ENCODE measurements at regions of chr6 and their contacts with region 1.

Region 1: GRCh38 chr6:26537846-26538571 is at the start of gene HMGN4:
- DNase-seq: peak; percentile 92 to 96 (median 95)
- H3K4me3 ChIP-seq: peak within 1 kb of the TSS; percentile 83 to 90
- H3K4me3 Mint-ChIP-seq: peak within 1 kb of the TSS; percentile 89 to 98 (median 93)
- H3K27ac ChIP-seq: peak within 1 kb of the TSS; percentile 90
- H3K27ac Mint-ChIP-seq: peak within 1 kb of the TSS; percentile 94 to 99 (median 97)
- H3K4me1 ChIP-seq: peaks cover 66% of the 10 kb centered on the region
- H3K4me1 Mint-ChIP-seq: peaks cover 38 to 76% (median 56%) of the 10 kb centered on the region in 4 donors
- H3K27me3 ChIP-seq: no peaks in the 10 kb centered on the region
- H3K27me3 Mint-ChIP-seq: peaks cover 3 to 6% of the 10 kb centered on the region in 2 donors
- total RNA-seq, gene HMGN4: 102 to 105 TPM

Region 2: GRCh38 chr6:26054857-26055669 is 482.9 kb before region 1 on chr6:
- CTCF ChIA-PET with region 1: no interaction called
- POLR2A ChIA-PET with region 1: interaction called, 5 read pairs
- intact Hi-C with region 1: loop called (anchors 10 kb)
- DNase-seq: peak; percentile 89 to 96 (median 91)
- H3K4me3 ChIP-seq: peak overlapping the region; percentile 67 to 78
- H3K4me3 Mint-ChIP-seq: peak overlapping the region; percentile 93 to 96 (median 94)
- H3K27ac ChIP-seq: peak overlapping the region; percentile 84
- H3K27ac Mint-ChIP-seq: peak overlapping the region; percentile 91 to 98 (median 98)
- H3K4me1 ChIP-seq: peaks cover 24% of the 10 kb centered on the region
- H3K4me1 Mint-ChIP-seq: peaks cover 7 to 34% (median 15%) of the 10 kb centered on the region in 4 donors
- H3K27me3 ChIP-seq: no peaks in the 10 kb centered on the region
- H3K27me3 Mint-ChIP-seq: no peaks in the 10 kb centered on the region

Region 3: GRCh38 chr6:26249957-26250697 is 287.9 kb before region 1 on chr6:
- CTCF ChIA-PET with region 1: no interaction called
- POLR2A ChIA-PET with region 1: interaction called, 13 read pairs
- intact Hi-C with region 1: no loop called
- DNase-seq: peak; percentile 79 to 88 (median 83)
- H3K4me3 ChIP-seq: peak overlapping the region; percentile 86 to 88
- H3K4me3 Mint-ChIP-seq: peak overlapping the region; percentile 92 to 99 (median 98)
- H3K27ac ChIP-seq: peak overlapping the region; percentile 59
- H3K27ac Mint-ChIP-seq: peak overlapping the region; percentile 85 to 97 (median 94)
- H3K4me1 ChIP-seq: peaks cover 25% of the 10 kb centered on the region
- H3K4me1 Mint-ChIP-seq: peaks cover 28 to 53% (median 40%) of the 10 kb centered on the region in 4 donors
- H3K27me3 ChIP-seq: no peaks in the 10 kb centered on the region
- H3K27me3 Mint-ChIP-seq: no peaks in the 10 kb centered on the region

Region 4: DNA sequence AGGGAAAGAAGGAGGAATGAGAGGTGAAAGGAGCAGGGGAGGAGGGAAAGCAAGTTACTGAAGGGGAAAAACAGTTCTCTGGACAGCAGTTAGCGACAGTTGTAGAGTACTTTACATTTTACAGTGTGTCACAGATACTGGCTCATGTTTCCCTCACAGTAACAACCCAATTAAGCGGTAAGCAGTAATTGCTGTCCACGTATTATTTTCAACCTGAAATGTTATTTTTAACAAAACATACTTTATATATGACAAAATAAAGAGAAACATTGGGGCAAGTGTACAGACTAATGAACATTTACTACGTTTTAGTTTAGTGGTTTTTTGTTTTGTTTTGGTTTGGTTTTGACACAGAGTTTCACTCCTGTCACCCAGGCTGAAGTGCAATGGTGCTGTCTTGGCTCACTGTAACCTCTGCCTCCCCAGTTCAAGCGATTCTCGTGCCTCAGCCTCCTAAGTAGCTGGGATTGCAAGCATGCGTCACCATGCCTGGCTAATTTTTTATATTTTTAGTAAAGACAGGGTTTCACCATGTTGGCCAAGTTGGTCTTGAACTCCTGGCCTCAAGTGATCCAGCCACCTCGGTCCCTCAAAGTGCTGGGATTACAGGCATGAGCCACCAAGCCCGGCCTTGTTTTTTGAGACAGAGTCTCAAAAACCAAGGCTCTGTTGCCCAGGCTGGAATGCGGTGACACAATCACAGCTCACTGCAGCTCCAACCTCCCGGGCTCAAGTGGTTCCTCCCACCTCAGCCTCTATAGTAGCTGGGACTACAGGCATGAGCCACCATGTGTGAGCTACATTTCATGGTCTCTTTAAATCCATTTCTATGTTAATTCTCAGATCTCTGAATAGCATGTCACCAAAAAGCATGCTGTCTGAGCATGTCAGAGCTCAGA is 195.7 kb before region 1 on chr6:
- CTCF ChIA-PET with region 1: interaction called, 10 read pairs
- POLR2A ChIA-PET with region 1: interaction called, 10 read pairs
- intact Hi-C with region 1: loop called (anchors 1 kb)
- DNase-seq: no peak
- H3K4me3 ChIP-seq: peak overlapping the region; percentile 39 to 40
- H3K4me3 Mint-ChIP-seq: peak overlapping the region; percentile 68 to 86 (median 86)
- H3K27ac ChIP-seq: no peak overlapping the region
- H3K27ac Mint-ChIP-seq: peak overlapping the region in 5 of 7 donors; percentile 42 to 91 (median 52)
- H3K4me1 ChIP-seq: peaks cover 11% of the 10 kb centered on the region
- H3K4me1 Mint-ChIP-seq: peaks cover 6 to 8% (median 7%) of the 10 kb centered on the region in 4 donors
- H3K27me3 ChIP-seq: no peaks in the 10 kb centered on the region
- H3K27me3 Mint-ChIP-seq: no peaks in the 10 kb centered on the region

Region 5: GRCh38 chr6:26394289-26394688 is 143.7 kb before region 1 on chr6:
- CTCF ChIA-PET with region 1: no interaction called
- POLR2A ChIA-PET with region 1: no interaction called
- intact Hi-C with region 1: no loop called
- DNase-seq: no peak
- H3K4me3 ChIP-seq: no peak overlapping the region
- H3K4me3 Mint-ChIP-seq: no peak overlapping the region
- H3K27ac ChIP-seq: no peak overlapping the region
- H3K27ac Mint-ChIP-seq: no peak overlapping the region
- H3K4me1 ChIP-seq: no peaks in the 10 kb centered on the region
- H3K4me1 Mint-ChIP-seq: no peaks in the 10 kb centered on the region
- H3K27me3 ChIP-seq: no peaks in the 10 kb centered on the region
- H3K27me3 Mint-ChIP-seq: no peaks in the 10 kb centered on the region

Region 6: DNA sequence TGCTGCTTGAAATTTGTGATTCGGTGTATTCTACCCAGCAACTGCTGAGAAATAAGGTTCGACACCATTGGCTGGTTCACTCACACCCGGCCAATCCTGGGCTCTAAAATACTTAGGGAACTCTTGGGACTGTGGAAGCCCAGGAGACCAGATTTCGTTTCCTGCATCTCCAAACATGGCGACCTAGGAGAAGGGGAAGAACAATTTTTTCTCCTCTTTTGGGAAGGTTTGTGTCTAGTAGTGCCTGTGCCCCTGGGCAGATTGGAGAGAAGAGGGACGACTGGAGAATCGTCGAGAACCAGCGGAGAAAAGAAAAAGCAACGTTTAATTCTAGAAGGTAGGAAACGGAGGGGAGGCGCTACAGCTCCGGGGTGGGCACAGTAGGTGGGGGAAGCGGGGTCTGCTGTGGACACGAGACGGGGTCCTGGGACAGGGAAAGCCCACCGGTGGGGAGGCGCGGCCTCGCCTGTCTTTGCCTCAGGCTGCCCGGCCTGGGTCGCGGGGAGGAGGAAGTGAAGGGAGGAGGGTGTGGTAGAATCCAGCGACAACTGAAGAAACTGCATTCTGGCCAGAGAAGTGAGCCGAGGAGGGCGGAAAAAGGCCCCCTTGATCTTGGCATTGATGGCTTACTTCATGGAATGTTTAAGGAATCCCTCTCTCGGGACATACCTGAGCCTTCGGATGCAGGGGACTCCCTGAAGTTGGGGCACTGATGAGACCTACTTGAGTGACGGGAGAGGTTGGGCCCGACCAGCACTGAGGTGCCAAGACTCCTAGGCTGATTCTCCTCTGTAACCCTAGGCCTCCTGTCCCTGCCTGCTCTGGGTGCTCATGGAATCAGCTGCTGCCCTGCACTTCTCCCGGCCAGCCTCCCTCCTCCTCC is 80.0 kb before region 1 on chr6 and contains the start of gene BTN2A1:
- CTCF ChIA-PET with region 1: no interaction called
- POLR2A ChIA-PET with region 1: interaction called, 6 read pairs
- intact Hi-C with region 1: loop called (anchors 1 kb)
- DNase-seq: peak; percentile 76 to 86 (median 78)
- H3K4me3 ChIP-seq: peak within 1 kb of the TSS; percentile 90 to 95
- H3K4me3 Mint-ChIP-seq: peak within 1 kb of the TSS; percentile 96 to 100 (median 98)
- H3K27ac ChIP-seq: peak within 1 kb of the TSS; percentile 85
- H3K27ac Mint-ChIP-seq: peak within 1 kb of the TSS; percentile 91 to 99 (median 98)
- H3K4me1 ChIP-seq: peaks cover 47% of the 10 kb centered on the region
- H3K4me1 Mint-ChIP-seq: peaks cover 45 to 73% (median 57%) of the 10 kb centered on the region in 4 donors
- H3K27me3 ChIP-seq: no peaks in the 10 kb centered on the region
- H3K27me3 Mint-ChIP-seq: no peaks in the 10 kb centered on the region
- total RNA-seq, gene BTN2A1: 57.0 to 62.8 TPM

Region 7: GRCh38 chr6:26520853-26521599 is 17.0 kb before region 1 on chr6:
- CTCF ChIA-PET with region 1: interaction called, 6 read pairs
- POLR2A ChIA-PET with region 1: interaction called, 77 read pairs
- intact Hi-C with region 1: loop called (anchors 1 kb)
- DNase-seq: peak; percentile 87 to 89 (median 88)
- H3K4me3 ChIP-seq: peak overlapping the region; percentile 64 to 69
- H3K4me3 Mint-ChIP-seq: peak overlapping the region; percentile 80 to 97 (median 92)
- H3K27ac ChIP-seq: peak overlapping the region; percentile 64
- H3K27ac Mint-ChIP-seq: peak overlapping the region; percentile 82 to 99 (median 96)
- H3K4me1 ChIP-seq: peaks cover 8% of the 10 kb centered on the region
- H3K4me1 Mint-ChIP-seq: peaks cover 27 to 44% (median 30%) of the 10 kb centered on the region in 4 donors
- H3K27me3 ChIP-seq: no peaks in the 10 kb centered on the region
- H3K27me3 Mint-ChIP-seq: peaks cover 1 to 2% of the 10 kb centered on the region in 2 donors

Region 8: GRCh38 chr6:26596579-26597388 is 58.8 kb after region 1 on chr6 and contains the start of gene ABT1:
- CTCF ChIA-PET with region 1: interaction called, 10 read pairs
- POLR2A ChIA-PET with region 1: interaction called, 11 read pairs
- intact Hi-C with region 1: loop called (anchors 1 kb)
- DNase-seq: peak; percentile 95 to 98 (median 96)
- H3K4me3 ChIP-seq: peak within 1 kb of the TSS; percentile 76 to 98
- H3K4me3 Mint-ChIP-seq: no peak within 1 kb of the TSS
- H3K27ac ChIP-seq: peak within 1 kb of the TSS; percentile 91
- H3K27ac Mint-ChIP-seq: peak within 1 kb of the TSS in 3 of 7 donors; percentile 80 to 92 (median 88)
- H3K4me1 ChIP-seq: peaks cover 24% of the 10 kb centered on the region
- H3K4me1 Mint-ChIP-seq: peaks cover 0 to 16% (median 8%) of the 10 kb centered on the region in 4 donors
- H3K27me3 ChIP-seq: no peaks in the 10 kb centered on the region
- H3K27me3 Mint-ChIP-seq: peaks cover 15 to 22% of the 10 kb centered on the region in 2 donors
- total RNA-seq, gene ABT1: 33.5 to 34.8 TPM

Region 9: GRCh38 chr6:26640806-26641205 is 102.8 kb after region 1 on chr6:
- CTCF ChIA-PET with region 1: no interaction called
- POLR2A ChIA-PET with region 1: no interaction called
- intact Hi-C with region 1: no loop called
- DNase-seq: no peak
- H3K4me3 ChIP-seq: no peak overlapping the region
- H3K4me3 Mint-ChIP-seq: no peak overlapping the region
- H3K27ac ChIP-seq: no peak overlapping the region
- H3K27ac Mint-ChIP-seq: no peak overlapping the region
- H3K4me1 ChIP-seq: no peaks in the 10 kb centered on the region
- H3K4me1 Mint-ChIP-seq: peaks cover 0 to 3% (median 0%) of the 10 kb centered on the region in 4 donors
- H3K27me3 ChIP-seq: no peaks in the 10 kb centered on the region
- H3K27me3 Mint-ChIP-seq: no peaks in the 10 kb centered on the region

Measured in CD4-positive, alpha-beta memory T cell (primary cell).